ENCODE measurements at regions of chr19 and their contacts with region 1.

Region 1: GRCh38 chr19:48637170-48637947 is at the start of gene DBP:
- DNase-seq: peak; percentile 91 to 100 (median 100)
- ATAC-seq: peak; percentile 83
- H3K4me3 ChIP-seq: peak within 1 kb of the TSS; percentile 89
- H3K4me3 Mint-ChIP-seq: peak within 1 kb of the TSS; percentile 87 to 100 (median 98)
- H3K27ac ChIP-seq: peak within 1 kb of the TSS; percentile 90
- H3K27ac Mint-ChIP-seq: peak within 1 kb of the TSS; percentile 97 to 100 (median 98)
- H3K4me1 ChIP-seq: peaks cover 33 to 38% of the 10 kb centered on the region in 2 donors
- H3K4me1 Mint-ChIP-seq: peaks cover 13 to 46% (median 41%) of the 10 kb centered on the region in 7 donors
- H3K27me3 ChIP-seq: no peaks in the 10 kb centered on the region
- H3K27me3 Mint-ChIP-seq: peaks cover 0 to 8% (median 0%) of the 10 kb centered on the region in 5 donors
- total RNA-seq, gene DBP: 11.9 to 79.9 (median 33.2) TPM

Region 2: DNA sequence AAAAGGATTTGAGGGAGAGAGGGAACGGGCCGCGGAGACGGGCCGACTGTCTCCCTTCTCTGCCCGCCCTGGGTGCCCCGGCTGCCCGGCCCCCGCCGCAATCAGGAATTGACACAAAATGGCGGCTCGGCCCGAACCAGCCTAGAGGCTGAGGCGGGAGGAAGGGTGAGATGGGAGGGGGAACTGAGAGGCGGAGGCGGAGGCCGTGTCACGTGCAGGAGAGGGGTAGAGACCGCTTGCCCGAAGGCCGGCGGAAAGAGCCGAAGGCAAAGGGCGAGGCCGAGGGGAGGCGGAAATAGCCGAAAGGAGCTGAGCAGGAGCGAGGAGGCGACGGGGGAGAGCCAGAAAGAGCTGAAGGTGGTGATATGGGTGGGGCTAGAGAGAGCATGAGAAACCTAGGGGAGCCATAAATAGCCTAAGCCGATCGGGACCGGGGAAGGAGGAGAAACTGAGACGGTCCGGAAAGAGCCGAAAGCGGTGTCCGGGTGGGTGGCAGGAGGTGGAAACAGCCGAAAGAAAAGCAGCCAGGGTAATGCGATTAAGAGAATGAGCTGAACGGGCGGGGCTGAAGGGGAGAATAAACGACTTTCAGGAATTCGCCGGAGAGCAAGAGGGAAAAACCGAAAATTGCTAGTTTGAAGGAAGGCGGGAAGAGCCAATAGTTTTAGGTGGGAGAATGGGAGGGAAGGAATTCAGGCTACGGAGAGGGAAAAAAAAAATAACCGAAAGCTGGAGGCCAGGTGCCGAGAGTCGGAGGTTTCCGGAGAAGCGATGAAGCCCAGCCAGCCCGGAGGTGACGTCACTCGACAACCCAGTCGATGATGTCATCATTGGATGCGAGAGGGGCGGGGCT is 1524.1 kb before region 1 on chr19 and contains the start of gene ZC3H4:
- CTCF ChIA-PET with region 1: no interaction called
- POLR2A ChIA-PET with region 1: no interaction called
- intact Hi-C with region 1: loop called in 1 of 2 experiments (anchors 5 kb)
- DNase-seq: peak; percentile 96 to 100 (median 100)
- ATAC-seq: peak; percentile 90
- H3K4me3 ChIP-seq: peak within 1 kb of the TSS; percentile 84
- H3K4me3 Mint-ChIP-seq: peak within 1 kb of the TSS; percentile 93 to 100 (median 98)
- H3K27ac ChIP-seq: peak within 1 kb of the TSS; percentile 99
- H3K27ac Mint-ChIP-seq: peak within 1 kb of the TSS; percentile 99 to 100 (median 100)
- H3K4me1 ChIP-seq: peaks cover 17 to 25% of the 10 kb centered on the region in 2 donors
- H3K4me1 Mint-ChIP-seq: peaks cover 22 to 38% (median 35%) of the 10 kb centered on the region in 7 donors
- H3K27me3 ChIP-seq: no peaks in the 10 kb centered on the region
- H3K27me3 Mint-ChIP-seq: peaks cover 0 to 2% (median 0%) of the 10 kb centered on the region in 5 donors
- total RNA-seq, gene ZC3H4: 53.6 to 123 (median 73.0) TPM

Region 3: DNA sequence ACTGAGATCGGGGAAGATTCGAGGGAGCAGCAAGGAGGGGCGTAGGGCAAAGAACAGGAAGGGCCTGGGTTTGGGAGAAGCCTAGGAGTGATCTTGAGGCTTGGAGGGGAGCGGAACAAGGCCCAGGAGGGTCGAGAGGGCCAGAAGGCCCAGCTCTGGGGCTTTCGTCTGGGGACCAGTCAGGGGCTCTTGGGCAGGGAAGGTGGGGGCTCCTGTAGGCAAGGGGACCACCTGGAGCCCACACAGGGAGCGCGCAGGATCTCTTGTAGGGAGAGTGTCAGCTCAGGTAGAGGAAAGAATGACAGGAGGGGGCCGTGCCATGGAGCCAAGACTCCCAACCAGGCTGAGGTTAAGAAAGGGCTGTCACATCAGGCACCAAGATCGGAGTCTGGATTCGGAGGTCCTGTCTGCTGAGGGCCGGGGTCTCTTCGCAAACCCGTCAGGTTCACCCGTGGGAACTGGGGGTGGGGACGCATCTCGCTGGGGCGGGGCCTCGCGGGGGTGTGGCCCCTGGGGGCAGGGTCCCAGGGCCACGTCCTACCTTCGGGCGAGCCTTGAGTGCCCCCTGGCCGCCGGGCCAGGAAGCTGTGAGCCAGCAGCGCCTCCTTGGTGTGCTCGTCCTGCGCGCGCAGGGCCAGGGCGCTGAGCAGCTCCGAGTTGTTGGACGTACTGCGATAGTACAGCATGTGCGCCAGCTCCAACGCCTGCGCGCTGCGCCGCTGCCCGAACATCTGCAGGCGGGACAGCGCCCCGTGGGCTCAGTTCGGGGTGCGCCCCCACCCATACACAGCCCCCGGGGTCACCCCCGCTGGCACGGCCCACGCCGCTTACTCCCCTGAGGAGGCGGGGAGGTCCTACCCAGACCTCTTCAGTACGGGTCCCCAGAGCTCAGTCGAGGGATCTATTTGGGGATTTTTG is 303.6 kb before region 1 on chr19:
- CTCF ChIA-PET with region 1: no interaction called
- POLR2A ChIA-PET with region 1: interaction called, 6 read pairs
- intact Hi-C with region 1: loop called in 1 of 2 experiments (anchors 5 kb)
- DNase-seq: peak; percentile 90 to 96 (median 93)
- ATAC-seq: peak; percentile 77
- H3K4me3 ChIP-seq: peak overlapping the region; percentile 77
- H3K4me3 Mint-ChIP-seq: peak overlapping the region; percentile 83 to 100 (median 97)
- H3K27ac ChIP-seq: peak overlapping the region; percentile 95
- H3K27ac Mint-ChIP-seq: peak overlapping the region; percentile 93 to 100 (median 97)
- H3K4me1 ChIP-seq: peaks cover 32 to 43% of the 10 kb centered on the region in 2 donors
- H3K4me1 Mint-ChIP-seq: peaks cover 25 to 61% (median 47%) of the 10 kb centered on the region in 7 donors
- H3K27me3 ChIP-seq: no peaks in the 10 kb centered on the region
- H3K27me3 Mint-ChIP-seq: no peaks in the 10 kb centered on the region

Region 4: GRCh38 chr19:48513289-48514122 is 123.9 kb before region 1 on chr19:
- CTCF ChIA-PET with region 1: no interaction called
- POLR2A ChIA-PET with region 1: no interaction called
- intact Hi-C with region 1: loop called in 1 of 2 experiments (anchors 1 kb)
- DNase-seq: peak in 8 of 9 donors; percentile 69 to 84 (median 78)
- ATAC-seq: peak; percentile 77
- H3K4me3 ChIP-seq: peak overlapping the region; percentile 72
- H3K4me3 Mint-ChIP-seq: no peak overlapping the region
- H3K27ac ChIP-seq: peak overlapping the region; percentile 82
- H3K27ac Mint-ChIP-seq: peak overlapping the region in 3 of 9 donors; percentile 68 to 91 (median 90)
- H3K4me1 ChIP-seq: peaks cover 21 to 22% of the 10 kb centered on the region in 2 donors
- H3K4me1 Mint-ChIP-seq: peaks cover 11 to 18% (median 13%) of the 10 kb centered on the region in 7 donors
- H3K27me3 ChIP-seq: no peaks in the 10 kb centered on the region
- H3K27me3 Mint-ChIP-seq: no peaks in the 10 kb centered on the region

Region 5: GRCh38 chr19:48674921-48675824 is 37.8 kb after region 1 on chr19:
- CTCF ChIA-PET with region 1: no interaction called
- POLR2A ChIA-PET with region 1: interaction called, 5 read pairs
- intact Hi-C with region 1: loop called in 1 of 2 experiments (anchors 5 kb)
- DNase-seq: peak; percentile 57 to 81 (median 72)
- ATAC-seq: peak; percentile 94
- H3K4me3 ChIP-seq: no peak overlapping the region
- H3K4me3 Mint-ChIP-seq: peak overlapping the region in 1 of 10 donors; percentile 47
- H3K27ac ChIP-seq: no peak overlapping the region
- H3K27ac Mint-ChIP-seq: peak overlapping the region in 7 of 9 donors; percentile 11 to 79 (median 49)
- H3K4me1 ChIP-seq: peaks cover 6 to 7% of the 10 kb centered on the region in 2 donors
- H3K4me1 Mint-ChIP-seq: peaks cover 3 to 8% (median 7%) of the 10 kb centered on the region in 7 donors
- H3K27me3 ChIP-seq: no peaks in the 10 kb centered on the region
- H3K27me3 Mint-ChIP-seq: no peaks in the 10 kb centered on the region

Region 6: DNA sequence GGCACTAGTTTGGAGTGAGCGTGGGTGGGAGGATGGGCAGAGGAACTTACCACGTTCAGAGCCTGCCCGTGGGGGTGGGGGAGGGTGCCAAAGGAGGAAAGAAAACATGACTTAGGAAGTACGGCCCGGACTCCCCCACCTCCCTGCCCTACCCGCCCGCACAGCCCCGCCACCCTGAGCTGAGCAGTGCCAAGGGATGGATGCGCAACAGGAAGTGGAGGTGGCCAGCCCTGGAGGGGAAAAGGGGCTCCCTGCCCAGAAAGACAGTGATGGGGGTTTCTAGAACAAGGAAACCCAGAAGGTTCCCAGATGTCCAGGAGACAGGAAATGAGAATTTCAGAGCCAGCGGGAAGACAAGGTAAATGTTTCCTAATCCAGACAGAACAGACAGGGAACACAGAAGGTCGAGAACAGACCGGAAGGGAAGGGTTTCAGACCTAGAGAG is 718.6 kb after region 1 on chr19:
- CTCF ChIA-PET with region 1: no interaction called
- POLR2A ChIA-PET with region 1: no interaction called
- intact Hi-C with region 1: no loop called
- DNase-seq: no peak
- ATAC-seq: no peak
- H3K4me3 ChIP-seq: no peak overlapping the region
- H3K4me3 Mint-ChIP-seq: peak overlapping the region in 2 of 10 donors; percentile 6 to 15
- H3K27ac ChIP-seq: no peak overlapping the region
- H3K27ac Mint-ChIP-seq: no peak overlapping the region
- H3K4me1 ChIP-seq: peaks cover 0 to 6% of the 10 kb centered on the region in 2 donors
- H3K4me1 Mint-ChIP-seq: peaks cover 0 to 27% (median 22%) of the 10 kb centered on the region in 7 donors
- H3K27me3 ChIP-seq: no peaks in the 10 kb centered on the region
- H3K27me3 Mint-ChIP-seq: peaks cover 0 to 53% (median 9%) of the 10 kb centered on the region in 5 donors

Region 7: DNA sequence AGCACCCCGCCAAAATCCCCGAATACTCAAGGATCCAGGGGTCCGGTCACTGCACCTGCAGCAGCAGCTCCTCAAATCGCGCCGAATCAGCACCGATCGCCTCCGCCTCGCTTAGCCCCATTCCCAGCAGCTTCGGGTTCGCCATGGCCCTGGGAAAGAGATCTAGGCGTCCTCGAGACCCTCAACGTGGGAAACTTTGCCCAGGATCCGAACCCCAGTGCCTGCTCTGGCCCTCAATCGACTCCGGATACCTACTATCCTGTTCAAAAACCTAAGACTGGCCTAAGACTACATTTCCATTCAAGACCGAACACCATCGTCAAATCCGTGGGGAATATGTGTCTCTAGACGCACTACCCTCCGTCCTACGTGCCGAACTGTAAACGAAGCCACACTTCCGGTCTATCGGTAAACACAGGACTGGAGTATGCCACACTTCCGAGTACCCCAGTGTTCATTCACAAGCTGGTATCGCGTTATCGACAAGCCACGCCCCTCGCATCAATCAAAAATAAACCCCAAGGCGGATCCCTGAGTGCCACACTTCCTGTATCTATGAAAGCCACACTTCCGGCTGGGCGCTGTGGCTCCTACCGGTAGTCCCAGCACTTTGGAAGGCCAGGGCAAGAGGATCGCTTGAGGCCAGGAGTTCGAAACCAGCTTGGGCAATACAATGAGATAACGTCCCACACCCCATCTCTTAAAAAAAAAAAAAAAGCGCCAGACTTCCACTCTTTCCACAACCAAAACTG is 814.2 kb after region 1 on chr19 and contains the start of gene PIH1D1:
- CTCF ChIA-PET with region 1: no interaction called
- POLR2A ChIA-PET with region 1: no interaction called
- intact Hi-C with region 1: loop called in 1 of 2 experiments (anchors 5 kb)
- DNase-seq: peak; percentile 69 to 97 (median 94)
- ATAC-seq: peak; percentile 71
- H3K4me3 ChIP-seq: peak within 1 kb of the TSS; percentile 85
- H3K4me3 Mint-ChIP-seq: peak within 1 kb of the TSS; percentile 95 to 100 (median 99)
- H3K27ac ChIP-seq: peak within 1 kb of the TSS; percentile 95
- H3K27ac Mint-ChIP-seq: peak within 1 kb of the TSS; percentile 92 to 100 (median 99)
- H3K4me1 ChIP-seq: peaks cover 15 to 26% of the 10 kb centered on the region in 2 donors
- H3K4me1 Mint-ChIP-seq: peaks cover 31 to 68% (median 55%) of the 10 kb centered on the region in 7 donors
- H3K27me3 ChIP-seq: no peaks in the 10 kb centered on the region
- H3K27me3 Mint-ChIP-seq: no peaks in the 10 kb centered on the region
- total RNA-seq, gene PIH1D1: 136 to 183 (median 159) TPM

Region 8: DNA sequence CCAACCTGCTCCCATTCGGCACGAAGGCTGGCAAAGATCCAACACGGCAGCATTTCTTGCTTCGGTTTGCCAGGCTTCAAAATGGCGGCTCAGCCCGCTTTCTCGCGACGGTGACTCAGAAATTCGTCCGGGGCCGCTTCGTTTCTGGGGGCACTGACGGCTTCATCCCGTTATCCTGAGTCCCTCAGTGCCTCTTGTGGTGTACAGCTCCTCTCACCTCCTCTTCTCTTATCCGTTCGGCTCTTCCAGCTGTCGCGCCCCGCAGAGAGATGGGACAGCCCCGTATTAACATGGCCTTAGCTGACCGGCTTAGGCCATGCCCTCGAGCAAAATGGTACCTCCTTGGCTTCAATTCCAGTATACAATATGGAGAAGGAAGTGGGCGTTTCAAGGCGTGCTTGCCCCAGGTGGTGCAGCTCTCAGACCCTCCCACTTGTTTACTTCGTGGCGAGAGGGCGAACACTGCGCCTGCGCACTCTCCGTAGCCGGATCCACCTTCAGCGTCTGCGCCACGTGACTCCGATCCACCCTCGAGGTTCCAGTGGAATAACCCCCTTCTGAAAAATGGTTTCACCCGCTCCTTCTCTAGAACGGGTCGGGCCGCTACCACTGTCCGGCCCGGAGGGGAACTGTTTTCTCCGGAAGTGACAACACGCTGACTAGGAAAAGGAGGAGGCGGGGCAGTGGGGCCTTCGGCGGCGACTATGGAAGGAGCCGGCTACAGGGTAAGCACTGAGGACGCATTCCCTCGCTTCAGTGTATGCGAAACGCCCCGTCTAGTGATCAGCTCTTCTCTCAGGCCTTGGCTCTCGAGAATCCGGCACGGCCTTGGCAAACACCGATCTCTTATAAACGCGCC is 1239.9 kb after region 1 on chr19 and contains the starts of genes AKT1S1 and TBC1D17:
- CTCF ChIA-PET with region 1: no interaction called
- POLR2A ChIA-PET with region 1: no interaction called
- intact Hi-C with region 1: loop called in 1 of 2 experiments (anchors 10 kb)
- DNase-seq: peak; percentile 90 to 100 (median 99)
- ATAC-seq: peak; percentile 81
- H3K4me3 ChIP-seq: peak within 1 kb of the TSS; percentile 96
- H3K4me3 Mint-ChIP-seq: no peak within 1 kb of the TSS
- H3K27ac ChIP-seq: peak within 1 kb of the TSS; percentile 97
- H3K27ac Mint-ChIP-seq: no peak within 1 kb of the TSS
- H3K4me1 ChIP-seq: peaks cover 11 to 20% of the 10 kb centered on the region in 2 donors
- H3K4me1 Mint-ChIP-seq: peaks cover 23 to 35% (median 28%) of the 10 kb centered on the region in 7 donors
- H3K27me3 ChIP-seq: no peaks in the 10 kb centered on the region
- H3K27me3 Mint-ChIP-seq: no peaks in the 10 kb centered on the region
- total RNA-seq, gene AKT1S1: 15.9 to 25.7 (median 21.2) TPM
- total RNA-seq, gene TBC1D17: 42.9 to 106 (median 53.0) TPM